ENCODE measurements at regions of chr2 and their contacts with region 1.

Region 1: GRCh38 chr2:225041851-225042799 is at the start of gene DOCK10:
- DNase-seq: peak; percentile 40 to 73 (median 52)
- ATAC-seq: peak; percentile 70
- H3K4me3 Mint-ChIP-seq: peak within 1 kb of the TSS; percentile 93 to 100 (median 99)
- H3K27ac Mint-ChIP-seq: peak within 1 kb of the TSS; percentile 90 to 100 (median 98)
- H3K4me1 Mint-ChIP-seq: peaks cover 38 to 56% (median 54%) of the 10 kb centered on the region in 4 donors
- H3K27me3 Mint-ChIP-seq: no peaks in the 10 kb centered on the region
- polyA plus RNA-seq, gene DOCK10: 34.1 to 57.9 (median 47.8) TPM

Region 2: GRCh38 chr2:225025917-225026571 is 16.1 kb before region 1 on chr2:
- POLR2A ChIA-PET with region 1: interaction called, 12 read pairs
- DNase-seq: peak in 2 of 10 donors; percentile 22
- ATAC-seq: peak; percentile 74 to 78
- H3K4me3 Mint-ChIP-seq: peak overlapping the region; percentile 2 to 72 (median 52)
- H3K27ac Mint-ChIP-seq: peak overlapping the region; percentile 29 to 80 (median 69)
- H3K4me1 Mint-ChIP-seq: peaks cover 43 to 85% (median 80%) of the 10 kb centered on the region in 4 donors
- H3K27me3 Mint-ChIP-seq: no peaks in the 10 kb centered on the region

Region 3: GRCh38 chr2:225052703-225053102 is 10.6 kb after region 1 on chr2:
- POLR2A ChIA-PET with region 1: interaction called, 64 read pairs
- DNase-seq: peak in 7 of 10 donors; percentile 19 to 76 (median 48)
- ATAC-seq: peak; percentile 88 to 97
- H3K4me3 Mint-ChIP-seq: peak overlapping the region in 9 of 10 donors; percentile 26 to 77 (median 67)
- H3K27ac Mint-ChIP-seq: peak overlapping the region; percentile 72 to 92 (median 77)
- H3K4me1 Mint-ChIP-seq: peaks cover 10 to 68% (median 57%) of the 10 kb centered on the region in 4 donors
- H3K27me3 Mint-ChIP-seq: no peaks in the 10 kb centered on the region

Region 4: GRCh38 chr2:225083276-225083675 is 41.2 kb after region 1 on chr2:
- POLR2A ChIA-PET with region 1: no interaction called
- DNase-seq: no peak
- ATAC-seq: no peak
- H3K4me3 Mint-ChIP-seq: no peak overlapping the region
- H3K27ac Mint-ChIP-seq: peak overlapping the region in 2 of 10 donors; percentile 7 to 11
- H3K4me1 Mint-ChIP-seq: peaks cover 9 to 14% (median 13%) of the 10 kb centered on the region in 4 donors
- H3K27me3 Mint-ChIP-seq: no peaks in the 10 kb centered on the region

Region 5: DNA sequence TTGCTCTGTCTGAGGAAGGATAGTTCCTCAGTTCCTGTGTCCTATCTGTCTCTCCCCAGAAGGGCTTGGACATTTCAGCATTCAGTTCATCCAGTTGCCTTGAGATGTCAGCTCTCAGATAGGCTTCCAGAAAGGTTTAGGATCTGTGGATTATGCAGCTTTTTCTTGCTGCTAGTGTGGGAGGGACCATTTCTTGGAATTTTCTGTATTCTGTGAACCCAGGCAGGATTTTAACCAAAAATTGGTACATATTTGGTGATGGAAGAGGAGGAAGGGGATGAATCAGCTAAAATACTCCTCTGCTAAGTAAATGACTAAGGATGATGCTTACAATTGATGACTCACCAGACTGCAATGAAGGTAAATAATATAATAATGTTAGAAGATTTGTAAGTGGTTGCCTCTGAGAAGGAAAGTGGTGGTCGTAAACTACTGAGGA is 58.8 kb after region 1 on chr2:
- POLR2A ChIA-PET with region 1: no interaction called
- DNase-seq: no peak
- ATAC-seq: no peak
- H3K4me3 Mint-ChIP-seq: no peak overlapping the region
- H3K27ac Mint-ChIP-seq: no peak overlapping the region
- H3K4me1 Mint-ChIP-seq: no peaks in the 10 kb centered on the region
- H3K27me3 Mint-ChIP-seq: no peaks in the 10 kb centered on the region

Region 6: GRCh38 chr2:225534697-225535096 is 492.6 kb after region 1 on chr2:
- POLR2A ChIA-PET with region 1: no interaction called
- DNase-seq: no peak
- ATAC-seq: no peak
- H3K4me3 Mint-ChIP-seq: no peak overlapping the region
- H3K27ac Mint-ChIP-seq: no peak overlapping the region
- H3K4me1 Mint-ChIP-seq: no peaks in the 10 kb centered on the region
- H3K27me3 Mint-ChIP-seq: peaks cover 4 to 17% (median 11%) of the 10 kb centered on the region in 5 donors

Measured in naive thymus-derived CD8-positive, alpha-beta T cell (primary cell).